Activated B cell treated with CpG ODN at 0.5 μM for 24 hours (primary cell): ENCODE measurements at regions of chr11 and their contacts with region 1.

Region 1: GRCh38 chr11:65382033-65382807 is at the start of gene SLC25A45:
- DNase-seq: peak; percentile 84
- ATAC-seq: peak; percentile 84
- H3K4me3 Mint-ChIP-seq: peak within 1 kb of the TSS; percentile 82
- H3K27ac Mint-ChIP-seq: peak within 1 kb of the TSS; percentile 94
- H3K4me1 Mint-ChIP-seq: peaks cover 67% of the 10 kb centered on the region
- H3K27me3 Mint-ChIP-seq: no peaks in the 10 kb centered on the region
- CTCF ChIP-seq: no peak
- total RNA-seq, gene SLC25A45: 11.4 and 12.3 TPM in 2 replicates

Region 2: GRCh38 chr11:64156235-64157011 is 1225.8 kb before region 1 on chr11:
- CTCF ChIA-PET with region 1: no interaction called
- POLR2A ChIA-PET with region 1: no interaction called
- intact Hi-C with region 1: no loop called
- DNase-seq: no peak
- ATAC-seq: no peak
- H3K4me3 Mint-ChIP-seq: no peak overlapping the region
- H3K27ac Mint-ChIP-seq: no peak overlapping the region
- H3K4me1 Mint-ChIP-seq: no peaks in the 10 kb centered on the region
- H3K27me3 Mint-ChIP-seq: peaks cover 7% of the 10 kb centered on the region
- CTCF ChIP-seq: no peak

Region 3: DNA sequence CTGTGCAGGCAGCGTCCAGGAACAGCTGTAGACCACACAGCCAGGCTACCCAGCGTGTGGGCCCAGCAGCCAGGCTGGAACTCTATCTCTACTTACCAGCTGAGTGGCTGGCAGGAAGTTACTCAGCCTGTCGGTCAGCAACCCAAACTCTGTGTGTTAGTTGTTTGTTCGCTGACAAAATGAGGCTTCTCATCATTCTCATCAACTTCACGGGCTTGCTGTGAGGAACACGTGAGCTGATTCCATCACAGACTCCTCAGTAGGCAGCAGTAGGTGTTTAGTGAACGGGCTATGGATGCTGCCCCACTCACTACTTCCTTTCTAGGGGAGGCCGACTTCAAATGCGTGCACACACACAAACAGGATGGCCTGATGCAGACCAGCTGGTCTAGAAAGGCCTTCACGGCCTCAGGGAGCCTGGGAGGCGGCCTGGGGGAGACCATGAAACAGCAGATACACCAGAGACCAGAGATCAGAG is 213.0 kb before region 1 on chr11:
- CTCF ChIA-PET with region 1: no interaction called
- POLR2A ChIA-PET with region 1: no interaction called
- intact Hi-C with region 1: no loop called
- DNase-seq: no peak
- ATAC-seq: peak; percentile 62
- H3K4me3 Mint-ChIP-seq: no peak overlapping the region
- H3K27ac Mint-ChIP-seq: peak overlapping the region; percentile 87
- H3K4me1 Mint-ChIP-seq: peaks cover 12% of the 10 kb centered on the region
- H3K27me3 Mint-ChIP-seq: no peaks in the 10 kb centered on the region
- CTCF ChIP-seq: no peak

Region 4: DNA sequence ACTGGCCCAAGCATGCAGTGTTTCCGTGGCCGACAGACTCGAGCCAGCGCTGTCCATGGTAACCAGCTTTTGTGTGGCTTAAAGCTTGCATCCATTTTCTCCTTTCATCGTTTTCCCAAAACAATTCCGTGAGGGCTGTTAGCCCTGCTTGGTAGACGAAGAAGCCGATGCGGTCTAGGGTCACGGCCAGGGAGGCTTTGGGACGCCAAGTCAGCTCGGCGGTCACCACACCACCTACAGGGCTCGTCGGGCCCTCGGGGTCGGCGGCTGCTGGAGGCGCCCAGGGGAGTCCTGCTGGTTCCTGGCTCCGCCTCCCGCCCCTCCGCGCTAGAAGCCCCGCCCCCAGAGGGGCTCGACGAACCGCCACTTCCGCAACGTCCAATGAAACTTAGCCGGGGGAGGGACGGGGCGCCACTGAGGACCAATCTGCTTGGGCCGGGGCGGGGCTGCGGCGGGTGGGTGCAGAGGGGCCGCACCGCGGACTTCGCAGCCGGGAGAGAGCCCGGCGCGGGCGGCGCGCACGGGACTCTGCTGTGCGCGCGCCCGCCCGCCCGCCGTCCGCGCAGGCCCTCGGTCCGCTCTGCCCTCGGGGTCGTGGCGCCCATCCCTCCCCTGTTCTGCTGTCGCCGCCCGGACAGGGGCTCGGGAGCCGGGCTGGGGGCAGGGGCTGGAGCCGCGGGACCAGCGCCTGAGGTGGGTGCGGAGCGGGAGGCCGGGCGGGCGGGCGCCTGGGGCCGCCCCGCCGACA is 27.8 kb before region 1 on chr11 and contains the start of gene TIGD3:
- CTCF ChIA-PET with region 1: interaction called, 4 read pairs
- POLR2A ChIA-PET with region 1: interaction called, 7 read pairs
- intact Hi-C with region 1: loop called (anchors 2 kb)
- DNase-seq: peak; percentile 96
- ATAC-seq: peak; percentile 97
- H3K4me3 Mint-ChIP-seq: peak within 1 kb of the TSS; percentile 91
- H3K27ac Mint-ChIP-seq: peak within 1 kb of the TSS; percentile 83
- H3K4me1 Mint-ChIP-seq: peaks cover 23% of the 10 kb centered on the region
- H3K27me3 Mint-ChIP-seq: no peaks in the 10 kb centered on the region
- CTCF ChIP-seq: no peak
- total RNA-seq, gene TIGD3: 1.4 and 1.6 TPM in 2 replicates

Region 5: GRCh38 chr11:65403607-65404121 is 21.4 kb after region 1 on chr11:
- CTCF ChIA-PET with region 1: interaction called, 5 read pairs
- POLR2A ChIA-PET with region 1: interaction called, 64 read pairs
- intact Hi-C with region 1: loop called (anchors 1 kb)
- DNase-seq: peak; percentile 46
- ATAC-seq: peak; percentile 73
- H3K4me3 Mint-ChIP-seq: peak overlapping the region; percentile 75
- H3K27ac Mint-ChIP-seq: peak overlapping the region; percentile 96
- H3K4me1 Mint-ChIP-seq: peaks cover 49% of the 10 kb centered on the region
- H3K27me3 Mint-ChIP-seq: no peaks in the 10 kb centered on the region
- CTCF ChIP-seq: no peak

Region 6: GRCh38 chr11:65425105-65425970 is 43.1 kb after region 1 on chr11:
- CTCF ChIA-PET with region 1: interaction called, 3 read pairs
- POLR2A ChIA-PET with region 1: interaction called, 457 read pairs
- intact Hi-C with region 1: loop called (anchors 1 kb)
- DNase-seq: no peak
- ATAC-seq: peak; percentile 38
- H3K4me3 Mint-ChIP-seq: peak overlapping the region; percentile 100
- H3K27ac Mint-ChIP-seq: peak overlapping the region; percentile 100
- H3K4me1 Mint-ChIP-seq: peaks cover 78% of the 10 kb centered on the region
- H3K27me3 Mint-ChIP-seq: no peaks in the 10 kb centered on the region
- CTCF ChIP-seq: no peak

Region 7: DNA sequence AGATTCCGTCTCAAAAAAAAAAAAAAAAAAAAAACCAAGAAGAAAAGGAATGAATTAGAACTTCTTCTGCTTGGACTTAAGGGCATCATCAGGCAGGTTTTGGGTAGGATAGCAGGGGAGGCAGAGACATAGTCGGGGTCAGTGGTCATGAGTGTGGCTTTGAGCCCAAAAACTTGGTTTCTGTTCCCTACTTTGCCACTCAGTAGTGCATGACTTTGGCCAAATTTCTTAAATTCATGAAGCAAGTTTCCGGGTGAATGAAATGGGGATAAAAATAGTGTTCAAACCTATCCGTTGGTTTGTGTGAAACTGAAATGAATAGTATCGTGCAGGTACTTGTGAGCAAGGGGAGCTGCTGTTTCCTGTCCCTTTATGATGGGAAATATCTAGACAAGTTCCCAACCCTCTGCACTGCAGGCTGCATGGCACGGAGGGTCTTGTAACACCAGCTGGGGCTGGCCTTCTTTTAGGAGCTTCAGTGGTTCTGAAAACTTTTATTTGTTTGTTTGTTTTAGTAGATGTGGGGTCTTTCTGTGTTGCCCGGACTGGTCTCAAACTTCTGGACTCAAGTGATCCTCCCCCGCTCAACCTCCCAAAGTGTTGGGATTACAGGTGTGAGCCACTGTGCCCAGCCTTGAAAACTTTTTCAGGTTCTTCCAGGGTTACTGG is 58.7 kb after region 1 on chr11:
- CTCF ChIA-PET with region 1: interaction called, 3 read pairs
- POLR2A ChIA-PET with region 1: interaction called, 17 read pairs
- intact Hi-C with region 1: no loop called
- DNase-seq: no peak
- ATAC-seq: peak; percentile 38
- H3K4me3 Mint-ChIP-seq: peak overlapping the region; percentile 77
- H3K27ac Mint-ChIP-seq: peak overlapping the region; percentile 92
- H3K4me1 Mint-ChIP-seq: peaks cover 70% of the 10 kb centered on the region
- H3K27me3 Mint-ChIP-seq: no peaks in the 10 kb centered on the region
- CTCF ChIP-seq: no peak

Region 8: GRCh38 chr11:65506770-65507505 is 124.7 kb after region 1 on chr11:
- CTCF ChIA-PET with region 1: interaction called, 16 read pairs
- POLR2A ChIA-PET with region 1: interaction called, 584 read pairs
- intact Hi-C with region 1: loop called (anchors 1 kb)
- DNase-seq: no peak
- ATAC-seq: peak; percentile 49
- H3K4me3 Mint-ChIP-seq: no peak overlapping the region
- H3K27ac Mint-ChIP-seq: peak overlapping the region; percentile 84
- H3K4me1 Mint-ChIP-seq: peaks cover 62% of the 10 kb centered on the region
- H3K27me3 Mint-ChIP-seq: no peaks in the 10 kb centered on the region
- CTCF ChIP-seq: no peak

Region 9: DNA sequence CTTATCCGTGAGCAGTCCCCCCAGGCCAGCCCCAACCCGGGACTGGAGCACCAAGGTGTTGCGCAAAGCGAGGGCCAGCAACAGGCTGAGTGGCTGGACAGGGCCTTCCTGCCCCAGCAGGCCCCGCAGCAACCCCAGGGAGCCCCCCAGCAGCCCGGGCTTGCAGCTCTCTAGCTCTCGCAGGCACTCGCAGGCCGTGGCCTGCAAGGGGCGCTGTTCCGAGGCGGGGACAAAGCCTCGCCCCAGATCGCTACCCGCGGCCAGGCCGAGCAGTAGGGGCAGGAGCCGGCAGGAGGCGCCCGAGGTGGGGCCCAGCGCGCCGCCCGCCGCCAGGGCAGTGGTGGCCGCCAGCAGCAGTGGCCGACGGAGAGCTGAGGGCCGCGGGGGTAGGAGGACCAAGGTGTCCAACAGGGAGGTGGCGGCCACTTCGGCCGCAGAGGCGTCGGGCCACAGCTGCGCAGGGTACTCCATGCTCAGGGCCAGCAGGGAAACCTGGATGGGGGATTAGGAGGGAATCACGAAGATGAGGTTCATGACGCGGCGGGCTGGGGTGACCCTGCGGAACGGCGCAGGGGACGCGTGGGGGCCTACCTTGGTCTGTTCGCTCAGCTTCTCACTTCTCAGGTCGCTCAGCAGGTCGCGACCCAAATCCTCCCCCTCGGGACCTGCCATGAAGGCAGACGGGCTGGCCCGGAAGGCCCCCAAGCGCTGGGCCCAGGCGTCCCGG is 397.8 kb after region 1 on chr11:
- CTCF ChIA-PET with region 1: no interaction called
- POLR2A ChIA-PET with region 1: no interaction called
- intact Hi-C with region 1: no loop called
- DNase-seq: peak; percentile 78
- ATAC-seq: peak; percentile 63
- H3K4me3 Mint-ChIP-seq: peak overlapping the region; percentile 86
- H3K27ac Mint-ChIP-seq: peak overlapping the region; percentile 59
- H3K4me1 Mint-ChIP-seq: peaks cover 13% of the 10 kb centered on the region
- H3K27me3 Mint-ChIP-seq: no peaks in the 10 kb centered on the region
- CTCF ChIP-seq: no peak